HEK293T (cell line): ENCODE measurements at regions of chr9 and their contacts with region 1.

Region 1: DNA sequence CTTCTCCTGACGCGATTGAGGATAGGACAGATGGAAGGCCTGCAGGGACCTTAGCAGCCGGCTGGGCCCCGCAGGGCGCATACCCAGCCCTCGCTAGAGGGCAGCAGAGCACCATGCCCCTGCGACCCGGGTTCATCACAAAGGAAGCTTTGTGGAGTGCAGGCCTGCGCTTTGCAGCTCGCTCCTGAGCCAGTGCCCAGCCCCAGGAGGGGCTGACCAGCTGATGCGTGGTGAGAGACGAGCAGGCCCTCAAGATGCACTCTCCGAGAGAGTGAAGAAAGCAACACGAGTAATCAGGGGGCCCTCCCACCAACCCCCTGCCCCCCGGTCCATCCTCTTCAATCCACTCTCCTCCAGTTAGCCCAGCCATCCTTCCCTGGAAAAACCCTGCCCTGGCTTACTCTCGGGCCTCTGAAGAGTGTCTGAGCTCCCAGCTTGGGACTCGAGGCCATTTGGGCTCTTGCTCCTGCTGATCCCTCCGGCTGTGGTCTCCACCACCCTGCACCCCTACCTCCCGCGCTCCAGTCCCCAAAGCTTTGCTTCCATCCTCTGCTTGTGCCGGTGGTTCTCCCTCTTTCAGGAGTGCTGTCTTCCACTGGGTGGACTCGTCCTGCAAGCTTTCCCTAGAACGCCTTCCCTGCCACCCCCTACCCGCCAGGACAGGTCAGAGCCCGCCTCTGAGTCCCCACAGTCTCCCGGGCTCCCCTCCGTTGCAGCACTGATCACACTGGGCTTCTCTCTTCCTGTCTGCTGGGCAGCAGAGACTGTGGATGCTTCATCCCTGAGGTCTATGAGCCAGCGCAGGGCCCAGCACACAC is 9.1 kb upstream of the KIF12 start:
- DNase-seq: peak; percentile 87

Region 2: GRCh38 chr9:114033397-114034103 is 74.7 kb before region 1 on chr9:
- CTCF ChIA-PET with region 1: no interaction called
- POLR2A ChIA-PET with region 1: no interaction called
- DNase-seq: peak; percentile 54

Region 3: DNA sequence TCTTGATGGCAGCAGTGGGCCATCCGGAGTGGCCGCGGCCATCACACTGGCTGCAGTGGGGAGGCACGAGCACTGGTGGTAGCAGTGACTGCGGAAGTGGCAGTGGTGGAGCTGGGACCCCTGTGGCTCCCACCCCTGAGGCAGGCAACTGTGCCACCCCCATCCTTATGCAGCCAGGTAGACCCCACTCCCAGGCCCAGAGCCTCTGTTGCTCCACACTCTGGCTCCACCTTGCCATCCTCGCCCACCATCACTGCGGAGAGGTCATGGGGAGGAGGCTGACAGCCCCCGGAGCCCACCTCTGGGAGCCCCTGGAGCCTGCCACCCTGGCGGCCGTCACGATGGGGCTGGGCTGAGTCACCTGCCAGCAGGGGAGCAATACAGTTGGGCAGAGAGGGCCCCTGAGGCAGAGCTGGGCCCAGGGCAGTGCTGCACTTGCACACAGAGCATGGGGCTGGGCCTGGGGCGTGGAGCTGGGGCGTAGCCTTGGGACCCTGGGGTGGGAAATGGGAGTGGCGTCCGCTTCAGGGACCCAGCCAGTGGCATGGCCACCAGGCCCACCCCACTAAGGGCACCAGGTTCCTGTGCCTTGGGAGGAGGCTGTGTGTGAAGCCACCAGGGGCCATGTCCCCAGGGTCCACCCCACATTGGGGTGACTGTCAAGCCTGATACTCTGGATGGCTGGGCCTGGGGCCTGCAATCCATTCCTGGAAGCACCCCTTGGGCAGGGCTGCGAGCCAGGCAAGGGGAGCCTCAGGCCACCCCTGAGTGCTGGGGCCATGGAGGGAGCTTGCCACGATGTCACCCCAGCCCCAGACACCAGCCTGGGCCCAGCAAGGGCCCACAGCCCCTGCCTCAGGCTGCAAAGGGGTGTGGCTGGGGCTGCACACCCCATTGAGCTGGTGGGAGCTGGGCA is 37.8 kb before region 1 on chr9:
- CTCF ChIA-PET with region 1: no interaction called
- POLR2A ChIA-PET with region 1: no interaction called
- DNase-seq: no peak

Region 4: GRCh38 chr9:114082017-114082762 is 26.0 kb before region 1 on chr9:
- CTCF ChIA-PET with region 1: interaction called, 18 read pairs
- POLR2A ChIA-PET with region 1: interaction called, 3 read pairs
- DNase-seq: peak; percentile 87

Region 5: GRCh38 chr9:114141553-114142402 is 33.6 kb after region 1 on chr9:
- CTCF ChIA-PET with region 1: interaction called, 13 read pairs
- POLR2A ChIA-PET with region 1: no interaction called
- DNase-seq: no peak

Region 6: GRCh38 chr9:114271641-114272081 is 163.4 kb after region 1 on chr9:
- CTCF ChIA-PET with region 1: interaction called, 19 read pairs
- POLR2A ChIA-PET with region 1: no interaction called
- DNase-seq: peak; percentile 48

Region 7: GRCh38 chr9:114291064-114291474 is 182.8 kb after region 1 on chr9:
- CTCF ChIA-PET with region 1: interaction called, 37 read pairs
- POLR2A ChIA-PET with region 1: no interaction called
- DNase-seq: peak; percentile 73